Ascending aorta (tissue), 2 donors: ENCODE measurements at regions of chr9 and their contacts with region 1.

Region 1: DNA sequence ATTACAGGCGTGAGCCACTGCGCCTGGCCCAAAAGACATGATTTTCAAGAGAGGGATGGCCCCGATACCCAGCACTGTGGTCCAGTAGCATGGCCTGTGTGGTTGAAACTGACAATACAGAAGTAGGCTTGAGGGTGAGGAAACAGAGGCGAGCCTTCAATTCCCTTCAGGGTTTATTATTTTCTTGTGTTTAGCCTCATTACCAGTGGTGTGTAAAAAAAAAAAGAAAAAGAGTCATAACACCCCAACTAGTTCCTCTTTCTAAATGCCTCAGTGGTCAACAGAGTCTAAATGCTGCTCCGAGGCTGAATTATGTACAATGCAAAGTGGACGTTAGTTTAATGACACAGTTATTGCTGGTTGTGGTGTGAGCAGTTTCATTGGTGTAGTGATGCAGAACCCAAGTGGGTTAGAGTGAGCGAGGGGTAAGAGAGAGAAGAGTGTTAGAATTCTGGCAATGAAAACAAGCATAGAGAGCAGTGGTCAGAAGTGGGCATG is 58.8 kb downstream of the SNX30 start:
- DNase-seq: no peak
- H3K4me3 ChIP-seq: no peak overlapping the region
- H3K27ac ChIP-seq: no peak overlapping the region
- H3K4me1 ChIP-seq: no peaks in the 10 kb centered on the region
- H3K27me3 ChIP-seq: no peaks in the 10 kb centered on the region
- CTCF ChIP-seq: no peak

Region 2: GRCh38 chr9:112754578-112754977 is 54.8 kb before region 1 on chr9:
- intact Hi-C with region 1: no loop called
- DNase-seq: no peak
- H3K4me3 ChIP-seq: no peak overlapping the region
- H3K27ac ChIP-seq: peak overlapping the region; percentile 42 to 51
- H3K4me1 ChIP-seq: peaks cover 14 to 37% of the 10 kb centered on the region in 2 donors
- H3K27me3 ChIP-seq: no peaks in the 10 kb centered on the region
- CTCF ChIP-seq: no peak

Region 3: GRCh38 chr9:112774006-112774996 is 35.1 kb before region 1 on chr9:
- intact Hi-C with region 1: loop called (anchors 2 kb)
- DNase-seq: no peak
- H3K4me3 ChIP-seq: no peak overlapping the region
- H3K27ac ChIP-seq: no peak overlapping the region
- H3K4me1 ChIP-seq: no peaks in the 10 kb centered on the region
- H3K27me3 ChIP-seq: no peaks in the 10 kb centered on the region
- CTCF ChIP-seq: no peak